Heart right ventricle (tissue), 16 donors: ENCODE measurements at regions of chr19 and their contacts with region 1.

Region 1: GRCh38 chr19:6632002-6632621 is 37.8 kb downstream of the TNFSF14 start:
- DNase-seq: peak in 1 of 2 donors; percentile 86
- ATAC-seq: peak in 7 of 8 donors; percentile 37 to 71 (median 65)
- H3K4me3 ChIP-seq: no peak overlapping the region
- H3K27ac ChIP-seq: no peak overlapping the region
- H3K4me1 ChIP-seq: peaks cover 0 to 5% (median 0%) of the 10 kb centered on the region in 9 donors
- H3K27me3 ChIP-seq: peaks cover 0 to 51% (median 11%) of the 10 kb centered on the region in 7 donors
- CTCF ChIP-seq: peak; percentile 81 to 93 (median 87)

Region 2: DNA sequence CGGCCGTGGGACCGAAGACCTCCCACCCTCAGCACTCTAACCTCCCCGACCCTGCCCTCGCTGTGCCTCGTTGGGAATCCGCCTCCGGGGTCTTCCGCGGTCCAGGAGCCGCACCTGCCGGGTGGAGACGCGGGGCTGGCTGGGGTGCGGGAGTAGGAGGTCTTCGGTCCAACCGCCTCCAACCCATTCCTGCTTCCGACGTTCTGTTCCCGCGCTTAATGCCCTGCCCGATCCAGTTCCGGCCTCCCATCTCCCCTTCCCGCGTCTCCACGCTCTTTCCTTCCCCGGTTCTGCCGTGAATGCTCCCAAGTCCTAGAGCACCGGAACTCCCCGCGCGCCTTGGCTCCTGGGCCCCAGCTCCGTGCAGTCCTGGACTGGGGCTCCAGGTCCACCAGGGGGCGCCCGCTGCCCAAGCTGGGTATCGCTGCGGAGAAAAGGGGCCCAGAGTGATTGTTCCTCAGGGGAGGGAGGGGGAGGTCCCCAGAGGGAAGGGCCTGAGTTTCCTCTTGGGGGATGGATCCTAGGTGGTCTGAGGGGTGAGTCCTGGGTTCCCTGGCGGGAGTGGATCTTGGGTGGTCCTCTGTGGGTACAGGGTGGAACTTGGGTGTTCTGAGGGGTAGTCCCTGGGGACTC is 115.3 kb before region 1 on chr19:
- intact Hi-C with region 1: loop called (anchors 1 to 5 kb)
- DNase-seq: peak; percentile 87 to 94
- ATAC-seq: peak; percentile 90 to 98 (median 94)
- H3K4me3 ChIP-seq: peak overlapping the region; percentile 48 to 73 (median 62)
- H3K27ac ChIP-seq: peak overlapping the region in 9 of 10 donors; percentile 33 to 77 (median 54)
- H3K4me1 ChIP-seq: peaks cover 0 to 31% (median 12%) of the 10 kb centered on the region in 9 donors
- H3K27me3 ChIP-seq: peaks cover 0 to 13% (median 9%) of the 10 kb centered on the region in 7 donors
- CTCF ChIP-seq: peak in 8 of 9 donors; percentile 87 to 98 (median 96)

Region 3: DNA sequence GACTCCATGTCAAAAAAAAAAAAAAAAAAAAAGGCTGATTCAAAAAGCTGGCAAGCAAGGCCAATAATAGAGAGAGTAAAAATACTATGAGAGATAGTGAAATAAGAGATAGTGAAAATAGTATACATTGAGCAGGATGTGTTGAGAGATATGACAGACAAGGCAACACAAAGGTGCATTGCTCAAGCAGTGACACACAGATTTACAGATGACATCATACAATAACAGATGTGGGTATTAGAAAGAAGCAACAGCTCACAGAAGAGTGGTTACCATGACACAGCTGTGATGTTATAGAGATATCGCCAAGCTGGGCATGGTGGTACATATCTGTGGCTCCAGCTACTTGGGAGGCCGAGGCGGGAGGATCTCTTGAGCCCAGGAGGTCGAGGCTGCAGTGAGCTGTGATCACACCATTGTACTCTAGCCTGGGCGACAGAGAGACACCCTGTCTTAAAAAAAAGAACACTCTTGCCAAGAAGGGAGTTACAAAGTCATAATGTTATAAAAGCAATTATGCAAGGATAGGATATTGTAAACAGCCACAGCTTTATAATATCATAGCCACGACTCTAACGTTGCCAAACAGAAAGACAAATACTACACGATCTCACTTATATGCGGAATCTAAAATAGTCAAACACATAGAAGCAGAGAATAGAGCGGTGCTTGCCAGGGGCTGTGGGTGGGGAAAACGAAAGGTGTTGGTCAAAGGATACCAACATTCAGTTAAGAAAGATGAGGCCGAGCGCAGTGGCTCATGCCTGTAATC is 91.0 kb before region 1 on chr19:
- intact Hi-C with region 1: no loop called
- DNase-seq: no peak
- ATAC-seq: no peak
- H3K4me3 ChIP-seq: no peak overlapping the region
- H3K27ac ChIP-seq: no peak overlapping the region
- H3K4me1 ChIP-seq: peaks cover 0 to 8% (median 0%) of the 10 kb centered on the region in 9 donors
- H3K27me3 ChIP-seq: peaks cover 0 to 38% (median 4%) of the 10 kb centered on the region in 7 donors
- CTCF ChIP-seq: no peak

Region 4: GRCh38 chr19:6663236-6664201 is 31.4 kb after region 1 on chr19:
- intact Hi-C with region 1: no loop called
- DNase-seq: no peak
- ATAC-seq: no peak
- H3K4me3 ChIP-seq: no peak overlapping the region
- H3K27ac ChIP-seq: peak overlapping the region in 1 of 10 donors; percentile 26
- H3K4me1 ChIP-seq: peaks cover 0 to 48% (median 0%) of the 10 kb centered on the region in 9 donors
- H3K27me3 ChIP-seq: peaks cover 0 to 61% (median 40%) of the 10 kb centered on the region in 7 donors
- CTCF ChIP-seq: no peak

Region 5: DNA sequence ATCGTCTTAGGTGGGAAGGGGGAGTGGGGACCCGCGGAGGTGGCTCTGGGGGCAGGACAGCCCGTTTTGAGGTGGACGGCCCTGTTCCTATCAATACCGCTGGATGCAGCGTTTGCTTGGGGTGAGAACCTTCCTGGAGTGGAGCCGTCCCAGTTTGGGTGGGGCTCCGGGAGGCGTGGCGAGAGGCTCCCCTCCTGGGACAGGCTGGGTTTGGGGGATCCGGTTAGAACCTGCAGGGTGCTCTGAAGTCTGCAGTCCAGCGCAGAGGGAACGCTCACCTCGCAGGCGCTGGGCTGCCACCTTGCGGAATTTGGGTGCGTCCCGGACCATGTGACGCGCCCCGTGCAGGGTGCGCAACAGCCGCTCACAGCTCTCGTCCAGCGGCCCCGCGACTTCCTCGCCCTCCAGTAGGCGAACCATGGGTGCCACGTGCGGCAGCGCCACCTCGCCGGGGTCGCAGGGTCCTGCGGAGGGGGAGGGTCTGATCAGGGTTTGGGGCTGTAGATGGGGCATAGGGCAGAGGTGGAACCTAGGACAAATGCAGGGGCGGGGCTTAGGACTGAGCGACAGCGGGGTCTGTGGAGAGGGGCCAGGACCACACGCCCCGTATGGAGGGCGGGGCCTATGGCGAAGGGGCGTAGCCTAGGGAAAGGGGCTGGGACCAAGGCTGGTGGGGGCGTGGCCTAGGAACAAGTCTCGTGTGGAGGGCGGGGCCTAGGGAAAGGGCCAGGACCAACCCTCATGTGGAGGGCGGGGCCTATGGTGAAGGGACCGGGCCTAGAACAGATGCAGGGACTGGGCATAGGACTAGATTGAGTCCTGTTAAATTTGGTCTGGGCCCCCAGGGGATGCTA is 121.3 kb after region 1 on chr19:
- intact Hi-C with region 1: loop called in 1 of 10 experiments (anchors 10 kb)
- DNase-seq: peak; percentile 68 to 80
- ATAC-seq: peak; percentile 77 to 90 (median 88)
- H3K4me3 ChIP-seq: peak overlapping the region in 8 of 10 donors; percentile 18 to 51 (median 48)
- H3K27ac ChIP-seq: peak overlapping the region in 5 of 10 donors; percentile 2 to 56 (median 19)
- H3K4me1 ChIP-seq: peaks cover 3 to 18% (median 13%) of the 10 kb centered on the region in 9 donors
- H3K27me3 ChIP-seq: no peaks in the 10 kb centered on the region
- CTCF ChIP-seq: peak in 8 of 9 donors; percentile 32 to 71 (median 55)

Region 6: GRCh38 chr19:6767357-6768235 is 135.5 kb after region 1 on chr19 and contains the start of gene SH2D3A:
- intact Hi-C with region 1: loop called in 2 of 10 experiments (anchors 10 kb)
- DNase-seq: peak; percentile 41 to 59
- ATAC-seq: peak; percentile 40 to 76 (median 70)
- H3K4me3 ChIP-seq: peak within 1 kb of the TSS in 9 of 10 donors; percentile 21 to 55 (median 40)
- H3K27ac ChIP-seq: peak within 1 kb of the TSS in 6 of 10 donors; percentile 45 to 74 (median 58)
- H3K4me1 ChIP-seq: peaks cover 3 to 38% (median 21%) of the 10 kb centered on the region in 9 donors
- H3K27me3 ChIP-seq: peaks cover 7 to 69% (median 34%) of the 10 kb centered on the region in 7 donors
- CTCF ChIP-seq: no peak
- total RNA-seq, gene SH2D3A: 0.16 to 0.79 (median 0.36) TPM in 5 of 10 donors, not detected in the others

Region 7: GRCh38 chr19:6862673-6863078 is 230.6 kb after region 1 on chr19:
- intact Hi-C with region 1: loop called in 9 of 10 experiments (anchors 1 to 5 kb)
- DNase-seq: peak; percentile 75 to 78
- ATAC-seq: peak; percentile 81 to 97 (median 92)
- H3K4me3 ChIP-seq: peak overlapping the region in 8 of 10 donors; percentile 17 to 47 (median 35)
- H3K27ac ChIP-seq: peak overlapping the region in 1 of 10 donors; percentile 55
- H3K4me1 ChIP-seq: peaks cover 0 to 19% (median 0%) of the 10 kb centered on the region in 9 donors
- H3K27me3 ChIP-seq: peaks cover 0 to 13% (median 11%) of the 10 kb centered on the region in 7 donors
- CTCF ChIP-seq: peak; percentile 69 to 88 (median 83)

Region 8: DNA sequence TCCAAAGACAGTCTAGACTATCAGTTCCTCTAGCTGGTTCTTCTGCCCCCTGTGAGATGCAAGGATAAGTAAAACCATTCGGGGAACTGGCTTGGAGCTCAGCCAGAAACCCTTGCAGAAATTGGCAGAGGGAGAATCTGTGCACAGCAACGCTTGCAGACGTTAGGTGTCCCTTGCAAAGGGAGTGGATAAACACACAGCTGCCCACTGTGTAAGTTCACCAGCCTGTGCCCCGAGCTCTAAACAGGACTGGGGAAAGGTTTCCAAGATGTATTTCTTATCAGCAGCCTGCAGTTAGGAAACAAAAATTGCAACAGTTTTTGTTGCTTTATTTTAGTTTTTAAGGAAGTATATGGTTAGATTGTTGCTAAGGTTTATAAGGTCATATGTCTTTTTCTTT is 236.2 kb after region 1 on chr19:
- intact Hi-C with region 1: loop called in 8 of 10 experiments (anchors 2 to 5 kb)
- DNase-seq: peak in 1 of 2 donors; percentile 12
- ATAC-seq: no peak
- H3K4me3 ChIP-seq: no peak overlapping the region
- H3K27ac ChIP-seq: peak overlapping the region in 1 of 10 donors; percentile 36
- H3K4me1 ChIP-seq: peaks cover 0 to 28% (median 0%) of the 10 kb centered on the region in 9 donors
- H3K27me3 ChIP-seq: peaks cover 0 to 32% (median 8%) of the 10 kb centered on the region in 7 donors
- CTCF ChIP-seq: no peak